Activated CD4-positive, alpha-beta T cell treated with anti-CD3 and anti-CD28 coated beads, Interleukin-2, amount 10 ng/mL, durations not matched to agents 24 days and 14 days (primary cell): ENCODE measurements at regions of chr4 and their contacts with region 1.

Region 1: DNA sequence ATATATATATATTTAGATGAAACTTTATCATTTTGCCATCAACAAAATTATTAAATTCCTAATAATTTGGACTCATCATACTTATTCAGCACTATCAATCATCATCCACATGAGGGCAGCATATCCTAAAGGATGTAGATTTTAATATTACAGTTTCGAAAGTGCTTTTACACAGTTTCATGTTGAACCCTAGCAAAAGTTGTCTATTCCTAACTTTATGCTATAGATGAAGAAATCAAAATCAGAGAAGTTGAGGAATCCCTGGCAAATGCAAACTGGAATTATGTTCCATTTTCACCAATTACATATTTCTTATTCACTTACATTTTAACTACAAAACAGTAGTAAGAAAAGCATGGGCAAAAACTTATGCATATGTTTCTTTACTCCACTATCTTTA is 36.6 kb upstream of the UGT2A1 start:
- DNase-seq: peak; percentile 59
- H3K4me3 Mint-ChIP-seq: no peak overlapping the region
- H3K27ac Mint-ChIP-seq: no peak overlapping the region
- H3K4me1 Mint-ChIP-seq: no peaks in the 10 kb centered on the region
- H3K27me3 Mint-ChIP-seq: peaks cover 2% of the 10 kb centered on the region

Region 2: DNA sequence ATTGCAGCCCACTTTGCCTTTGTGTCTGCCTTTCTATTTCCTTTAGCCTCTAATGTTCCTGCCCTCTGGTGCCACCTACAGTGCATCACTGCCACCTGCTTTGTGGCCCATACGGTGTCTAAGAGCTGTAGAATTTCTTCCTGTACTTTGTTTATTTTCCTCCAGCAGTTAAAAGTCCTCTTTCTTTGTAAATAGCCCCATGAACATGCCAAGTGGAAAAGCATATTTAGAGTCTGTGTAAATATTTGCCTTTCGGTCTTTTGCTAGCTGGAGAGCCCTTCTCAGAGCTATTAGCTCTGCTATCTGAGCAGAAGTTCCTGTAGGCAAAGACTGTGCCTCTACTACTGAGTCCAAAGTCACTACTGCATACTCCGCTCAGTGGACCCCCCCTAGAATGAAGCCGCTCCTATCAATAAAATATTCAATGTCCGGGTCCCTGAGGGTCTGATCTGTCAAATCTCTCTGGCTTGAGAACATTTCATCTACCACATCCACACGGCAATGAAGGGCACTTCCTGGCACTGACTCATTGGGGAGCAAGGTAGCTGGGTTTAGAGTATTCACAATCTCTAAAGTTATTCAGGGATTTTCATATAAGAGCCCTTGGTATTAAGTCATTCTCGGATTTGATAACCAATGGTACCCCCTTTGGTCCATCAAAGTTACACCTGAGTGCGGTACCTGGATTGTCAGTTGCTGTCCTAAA is 134.0 kb after region 1 on chr4:
- intact Hi-C with region 1: loop called (anchors 1 kb)
- DNase-seq: peak; percentile 86
- H3K4me3 Mint-ChIP-seq: no peak overlapping the region
- H3K27ac Mint-ChIP-seq: no peak overlapping the region
- H3K4me1 Mint-ChIP-seq: peaks cover 5% of the 10 kb centered on the region
- H3K27me3 Mint-ChIP-seq: no peaks in the 10 kb centered on the region

Region 3: DNA sequence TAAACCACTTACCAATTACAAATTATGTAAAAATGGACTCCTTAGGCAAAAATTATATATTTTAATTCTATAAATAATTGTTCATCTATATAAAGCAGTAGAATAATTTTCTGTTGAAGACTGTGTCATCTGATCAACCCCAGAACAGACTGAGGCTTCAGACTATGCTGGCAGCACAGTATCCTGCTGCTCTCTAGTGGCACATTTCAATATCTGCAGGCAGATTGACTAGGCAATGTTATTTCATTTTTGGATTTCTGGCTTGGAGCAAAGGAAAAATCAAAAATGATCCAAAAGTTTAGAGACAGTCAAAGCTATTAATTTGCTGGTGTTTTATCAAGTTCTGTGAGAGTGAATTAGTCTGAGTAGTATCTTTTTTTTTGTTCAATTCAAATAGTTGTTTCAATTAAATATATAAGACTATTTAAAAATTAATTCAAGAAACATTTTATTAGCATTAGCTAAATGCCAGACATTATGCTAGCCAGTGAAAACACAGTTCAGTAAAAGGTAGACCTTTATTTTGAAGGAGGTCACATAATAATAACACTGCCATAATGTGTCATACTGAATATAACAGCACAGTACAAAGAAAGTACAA is 191.7 kb after region 1 on chr4:
- intact Hi-C with region 1: loop called (anchors 1 kb)
- DNase-seq: peak; percentile 70
- H3K4me3 Mint-ChIP-seq: no peak overlapping the region
- H3K27ac Mint-ChIP-seq: no peak overlapping the region
- H3K4me1 Mint-ChIP-seq: no peaks in the 10 kb centered on the region
- H3K27me3 Mint-ChIP-seq: no peaks in the 10 kb centered on the region

Region 4: GRCh38 chr4:70183168-70183939 is 493.8 kb after region 1 on chr4:
- intact Hi-C with region 1: loop called (anchors 1 kb)
- DNase-seq: peak; percentile 71
- H3K4me3 Mint-ChIP-seq: no peak overlapping the region
- H3K27ac Mint-ChIP-seq: no peak overlapping the region
- H3K4me1 Mint-ChIP-seq: no peaks in the 10 kb centered on the region
- H3K27me3 Mint-ChIP-seq: no peaks in the 10 kb centered on the region

Region 5: DNA sequence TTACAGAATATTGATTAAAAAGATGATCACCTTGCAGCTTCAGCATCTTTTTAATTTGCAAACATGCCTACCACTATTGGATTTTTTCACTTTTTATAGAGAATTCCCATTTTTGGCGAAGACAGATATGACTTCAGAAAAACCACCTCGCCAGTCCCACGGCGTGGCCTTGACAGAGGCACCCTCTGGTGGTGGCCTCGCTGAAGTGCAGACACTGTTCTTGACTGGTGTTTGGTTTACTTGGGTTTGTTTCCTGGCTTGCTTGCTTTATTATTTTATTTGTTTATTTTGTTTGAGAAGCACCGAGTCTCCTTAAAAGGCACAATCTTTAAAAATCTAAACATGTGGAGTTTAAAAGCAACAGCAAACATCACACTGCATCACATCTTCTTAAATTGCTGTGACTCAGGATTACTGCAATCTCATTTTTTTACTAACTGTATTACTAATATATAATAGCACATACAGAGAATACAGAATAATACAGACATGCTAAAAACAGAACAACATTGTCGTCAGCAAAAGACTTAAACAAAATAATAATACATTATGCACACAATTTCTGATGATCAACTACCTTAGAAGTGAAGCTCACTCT is 815.7 kb after region 1 on chr4:
- intact Hi-C with region 1: loop called (anchors 2 kb)
- DNase-seq: peak; percentile 85
- H3K4me3 Mint-ChIP-seq: no peak overlapping the region
- H3K27ac Mint-ChIP-seq: no peak overlapping the region
- H3K4me1 Mint-ChIP-seq: no peaks in the 10 kb centered on the region
- H3K27me3 Mint-ChIP-seq: no peaks in the 10 kb centered on the region